ENCODE measurements at regions of chr5 and their contacts with region 1.

Region 1: GRCh38 chr5:107248066-107248695 is 422.6 kb downstream of the EFNA5 start:
- DNase-seq: peak; percentile 69
- ATAC-seq: peak; percentile 43
- H3K4me3 ChIP-seq: no peak overlapping the region
- H3K27ac ChIP-seq: no peak overlapping the region
- H3K4me1 ChIP-seq: peaks cover 4% of the 10 kb centered on the region; the same call in 1 of the 2 replicates
- H3K27me3 ChIP-seq: no peaks in the 10 kb centered on the region
- CTCF ChIP-seq: peak; percentile 84

Region 2: DNA sequence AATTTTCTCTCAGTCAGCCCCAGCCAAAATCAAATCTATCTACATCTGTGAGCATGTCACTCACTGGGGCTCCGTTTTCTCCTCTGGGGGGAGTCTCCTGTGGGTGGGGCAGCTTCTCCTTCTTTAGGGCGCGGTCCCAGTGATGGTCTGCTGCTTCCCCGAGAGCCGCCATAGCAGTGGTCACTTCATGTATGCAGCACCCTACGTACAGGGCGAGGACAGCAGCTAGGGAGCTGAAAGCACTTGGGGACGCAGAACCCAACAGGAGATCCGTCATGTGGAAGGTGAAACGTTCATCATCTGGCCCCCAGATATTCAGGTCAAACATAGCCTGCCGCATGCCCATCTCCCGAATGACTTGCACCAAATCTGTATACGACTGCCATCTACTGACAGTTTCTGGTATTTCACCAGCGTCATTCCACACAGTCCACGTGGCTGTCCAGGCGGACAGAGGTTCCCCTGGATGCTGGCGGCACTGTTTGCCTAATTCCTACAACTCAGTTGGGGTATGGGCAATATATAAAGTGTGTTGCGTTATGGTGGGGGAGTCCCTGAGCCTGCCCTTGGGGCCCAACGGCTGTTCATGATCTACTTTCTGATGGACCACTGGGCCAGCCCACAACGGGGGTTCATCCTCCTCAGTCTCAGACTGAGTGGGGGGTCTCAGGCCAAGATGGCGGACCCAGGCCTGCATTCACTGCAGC is 372.4 kb before region 1 on chr5:
- CTCF ChIA-PET with region 1: no interaction called
- POLR2A ChIA-PET with region 1: no interaction called
- intact Hi-C with region 1: loop called (anchors 10 kb)
- DNase-seq: peak; percentile 90
- ATAC-seq: peak; percentile 66
- H3K4me3 ChIP-seq: no peak overlapping the region
- H3K27ac ChIP-seq: no peak overlapping the region
- H3K4me1 ChIP-seq: peaks cover 8% of the 10 kb centered on the region
- H3K27me3 ChIP-seq: no peaks in the 10 kb centered on the region
- CTCF ChIP-seq: peak; percentile 83

Region 3: GRCh38 chr5:107104040-107104995 is 143.9 kb before region 1 on chr5:
- CTCF ChIA-PET with region 1: interaction called, 11 read pairs
- POLR2A ChIA-PET with region 1: no interaction called
- intact Hi-C with region 1: no loop called
- DNase-seq: peak; percentile 40
- ATAC-seq: peak; percentile 48; the same call in 1 of the 2 replicates
- H3K4me3 ChIP-seq: no peak overlapping the region
- H3K27ac ChIP-seq: no peak overlapping the region
- H3K4me1 ChIP-seq: no peaks in the 10 kb centered on the region
- H3K27me3 ChIP-seq: no peaks in the 10 kb centered on the region
- CTCF ChIP-seq: peak; percentile 55; the same call in 1 of the 2 replicates

Region 4: DNA sequence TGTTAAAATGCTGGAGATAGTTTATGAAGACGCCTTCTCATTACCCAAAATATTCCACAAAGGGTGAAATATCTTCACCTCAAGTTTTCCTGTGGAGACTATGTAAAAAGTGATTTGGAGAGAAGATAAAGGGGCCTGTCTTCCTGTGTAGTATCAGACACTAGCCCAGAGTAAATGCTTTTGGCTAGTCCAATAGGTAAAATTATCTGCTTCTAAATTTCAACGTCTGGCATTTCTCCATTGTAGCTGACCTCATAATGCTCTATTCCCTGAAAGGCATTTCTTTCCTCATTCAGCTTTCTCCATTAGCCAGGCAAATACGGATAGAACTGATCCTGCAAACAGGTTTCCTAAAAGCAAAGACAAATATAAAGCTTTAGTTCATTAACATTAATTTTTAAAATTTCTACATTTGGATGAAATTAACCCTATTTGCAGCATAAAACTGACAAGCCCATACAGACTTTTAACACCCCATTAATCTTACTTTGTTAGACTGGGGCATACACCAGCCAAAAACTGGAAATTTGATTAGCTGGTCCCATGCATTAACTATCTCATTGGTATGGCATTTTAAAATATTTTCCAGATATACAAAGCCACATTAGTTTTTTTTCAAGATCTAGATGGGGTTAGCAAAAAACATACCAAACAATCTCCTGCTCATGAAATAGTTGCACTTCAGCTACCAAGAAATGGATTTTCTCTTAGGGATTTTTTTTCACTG is 126.2 kb before region 1 on chr5:
- CTCF ChIA-PET with region 1: no interaction called
- POLR2A ChIA-PET with region 1: no interaction called
- intact Hi-C with region 1: no loop called
- DNase-seq: no peak
- ATAC-seq: no peak
- H3K4me3 ChIP-seq: no peak overlapping the region
- H3K27ac ChIP-seq: no peak overlapping the region
- H3K4me1 ChIP-seq: peaks cover 4% of the 10 kb centered on the region
- H3K27me3 ChIP-seq: no peaks in the 10 kb centered on the region
- CTCF ChIP-seq: no peak